BJ (cell line): ENCODE measurements at regions of chr20 and their contacts with region 1.

Region 1: DNA sequence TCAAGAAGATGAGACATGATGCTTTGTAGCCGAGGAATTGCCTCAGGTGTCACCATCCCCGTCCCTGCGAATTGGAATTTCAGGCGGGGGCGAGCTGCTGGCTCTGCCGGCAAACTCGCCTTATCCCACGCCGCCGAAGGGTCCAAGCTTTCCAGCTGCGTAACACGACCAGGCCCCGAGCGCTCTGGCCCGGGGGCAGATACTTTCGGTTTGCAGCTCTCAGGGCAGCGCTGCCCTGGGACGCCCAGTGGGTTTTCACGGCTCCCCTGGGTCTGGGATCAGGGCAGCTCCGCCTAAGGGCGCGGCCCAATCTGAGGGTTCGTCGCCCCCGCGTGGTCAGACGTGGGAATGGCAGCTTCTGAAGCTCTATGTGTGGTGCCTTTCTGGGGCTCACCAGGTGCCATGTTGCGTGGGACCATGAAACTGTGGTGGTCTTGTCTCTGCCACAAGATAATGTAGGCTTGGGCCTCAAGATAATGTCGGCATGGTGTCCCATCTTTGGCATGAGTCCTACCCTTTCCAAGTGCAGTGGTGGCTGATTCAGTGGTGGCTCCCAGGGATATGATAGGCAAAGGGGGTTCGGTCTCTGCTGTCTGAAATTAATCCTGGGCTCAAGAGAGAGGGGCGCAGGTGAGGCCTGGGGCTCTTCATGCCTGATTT is 20.9 kb downstream of the PIGT start:
- DNase-seq: no peak
- H3K4me3 ChIP-seq: peak overlapping the region; percentile 45
- H3K27me3 ChIP-seq: no peaks in the 10 kb centered on the region
- CTCF ChIP-seq: peak; percentile 96

Region 2: GRCh38 chr20:45254869-45255266 is 182.0 kb before region 1 on chr20:
- CTCF ChIA-PET with region 1: no interaction called
- POLR2A ChIA-PET with region 1: no interaction called
- DNase-seq: no peak
- H3K4me3 ChIP-seq: no peak overlapping the region
- H3K27me3 ChIP-seq: peaks cover 6% of the 10 kb centered on the region
- CTCF ChIP-seq: no peak

Region 3: DNA sequence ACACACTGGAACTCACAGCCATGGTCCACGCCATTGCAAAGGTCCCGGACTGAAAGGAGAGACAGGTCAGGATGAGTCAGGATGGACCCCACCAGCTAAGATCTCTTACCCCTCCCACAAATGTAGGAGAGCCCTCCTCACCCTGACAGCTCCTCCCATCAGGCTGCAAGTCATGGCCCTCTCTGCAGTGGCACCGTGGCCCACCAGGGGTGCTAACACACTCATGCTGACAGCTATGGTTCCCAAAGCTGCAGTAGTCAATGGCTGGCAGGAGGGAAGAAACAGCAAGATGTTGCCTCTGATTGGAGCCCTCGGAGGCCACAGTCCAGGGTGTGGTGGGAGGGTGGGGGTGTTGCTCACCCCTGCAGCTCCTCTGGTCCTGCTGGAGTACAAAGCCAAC is 135.9 kb before region 1 on chr20:
- CTCF ChIA-PET with region 1: interaction called, 10 read pairs
- POLR2A ChIA-PET with region 1: no interaction called
- DNase-seq: no peak
- H3K4me3 ChIP-seq: no peak overlapping the region
- H3K27me3 ChIP-seq: peaks cover 3% of the 10 kb centered on the region; the same call in 1 of the 2 replicates
- CTCF ChIP-seq: peak; percentile 40; the same call in 1 of the 2 replicates

Region 4: GRCh38 chr20:45322952-45323383 is 113.9 kb before region 1 on chr20:
- CTCF ChIA-PET with region 1: interaction called, 193 read pairs
- POLR2A ChIA-PET with region 1: no interaction called
- DNase-seq: no peak
- H3K4me3 ChIP-seq: no peak overlapping the region
- H3K27me3 ChIP-seq: 0 out of 2 replicates have a peak, but pooled peaks cover 1% of the 10 kb centered on the region
- CTCF ChIP-seq: no peak

Region 5: GRCh38 chr20:45362804-45363610 is 73.9 kb before region 1 on chr20 and contains the start of gene SYS1:
- CTCF ChIA-PET with region 1: interaction called, 101 read pairs
- POLR2A ChIA-PET with region 1: interaction called, 17 read pairs
- DNase-seq: peak; percentile 94
- H3K4me3 ChIP-seq: peak within 1 kb of the TSS; percentile 89
- H3K27me3 ChIP-seq: no peaks in the 10 kb centered on the region
- CTCF ChIP-seq: peak; percentile 92
- polyA plus RNA-seq, gene SYS1: 38.8 and 71.4 TPM in 2 replicates

Region 6: GRCh38 chr20:45419188-45420091 is 17.4 kb before region 1 on chr20:
- CTCF ChIA-PET with region 1: interaction called, 31 read pairs
- POLR2A ChIA-PET with region 1: no interaction called
- DNase-seq: peak; percentile 62
- H3K4me3 ChIP-seq: no peak overlapping the region
- H3K27me3 ChIP-seq: no peaks in the 10 kb centered on the region
- CTCF ChIP-seq: no peak

Region 7: GRCh38 chr20:45867819-45868176 is 430.9 kb after region 1 on chr20:
- CTCF ChIA-PET with region 1: no interaction called
- POLR2A ChIA-PET with region 1: no interaction called
- DNase-seq: peak; percentile 53
- H3K4me3 ChIP-seq: no peak overlapping the region
- H3K27me3 ChIP-seq: no peaks in the 10 kb centered on the region
- CTCF ChIP-seq: no peak